Gastrocnemius medialis (tissue), 4 donors: ENCODE measurements at regions of chr1 and their contacts with region 1.

Region 1: DNA sequence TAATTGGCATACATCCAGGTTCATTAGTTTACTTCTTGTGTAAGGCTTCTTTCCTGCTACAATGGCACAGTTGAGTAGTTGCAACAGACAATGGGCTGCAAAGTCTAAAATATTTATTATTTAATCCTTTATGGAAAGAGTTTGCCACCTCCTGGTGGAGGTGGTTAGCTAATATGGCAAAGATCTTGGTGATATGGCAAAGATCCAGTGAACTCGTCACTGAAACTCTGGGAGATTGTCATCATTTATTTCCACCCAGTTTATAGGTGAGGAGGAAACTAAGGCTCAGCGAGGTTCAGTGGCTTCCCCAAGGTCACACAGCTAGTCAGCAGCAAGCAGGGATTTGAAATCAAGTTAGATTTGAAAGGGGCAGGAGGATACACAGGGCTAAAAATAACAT is 16.1 kb upstream of the IFFO2 start:
- DNase-seq: no peak
- ATAC-seq: peak in 1 of 2 donors; percentile 75
- H3K4me3 ChIP-seq: no peak overlapping the region
- H3K27ac ChIP-seq: no peak overlapping the region
- H3K4me1 ChIP-seq: peaks cover 0 to 5% of the 10 kb centered on the region in 2 donors
- H3K27me3 ChIP-seq: no peaks in the 10 kb centered on the region
- CTCF ChIP-seq: peak in 4 of 5 experiments; percentile 11 to 40 (median 26)
- POLR2A ChIP-seq: no peak

Region 2: GRCh38 chr1:18913065-18913835 is 59.3 kb before region 1 on chr1:
- in situ Hi-C with region 1: loop called in 1 of 4 experiments (anchors 5 kb)
- intact Hi-C with region 1: no loop called
- DNase-seq: peak; percentile 56 to 71
- ATAC-seq: peak; percentile 83 to 86
- H3K4me3 ChIP-seq: peak overlapping the region in 1 of 4 donors; percentile 13
- H3K27ac ChIP-seq: peak overlapping the region; percentile 15 to 71 (median 52)
- H3K4me1 ChIP-seq: peaks cover 4 to 5% of the 10 kb centered on the region in 2 donors
- H3K27me3 ChIP-seq: no peaks in the 10 kb centered on the region
- CTCF ChIP-seq: peak; percentile 87 to 94 (median 91)
- POLR2A ChIP-seq: no peak

Region 3: DNA sequence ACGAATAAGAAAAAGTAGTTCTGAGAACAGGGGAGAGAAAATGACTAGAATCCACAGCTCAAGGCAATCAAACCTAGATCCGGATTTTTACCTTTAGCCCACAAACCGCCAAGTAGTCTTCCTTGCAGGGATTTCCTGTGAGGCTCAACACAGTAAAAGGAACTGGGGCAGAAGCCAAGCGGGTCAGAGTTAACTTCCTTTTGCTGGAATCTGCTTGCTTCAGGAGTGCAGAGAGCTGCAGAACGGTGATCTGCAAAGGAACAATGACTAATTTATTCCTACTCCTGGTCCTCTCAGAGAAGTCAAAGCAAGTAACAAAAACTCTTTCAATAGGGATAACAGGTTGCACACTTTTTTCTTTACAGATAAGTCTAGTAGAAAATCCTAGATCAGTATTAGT is 184.1 kb after region 1 on chr1:
- in situ Hi-C with region 1: no loop called
- intact Hi-C with region 1: no loop called
- DNase-seq: no peak
- ATAC-seq: peak in 1 of 2 donors; percentile 56
- H3K4me3 ChIP-seq: no peak overlapping the region
- H3K27ac ChIP-seq: peak overlapping the region in 2 of 4 donors; percentile 14 to 37
- H3K4me1 ChIP-seq: peaks cover 3 to 8% of the 10 kb centered on the region in 2 donors
- H3K27me3 ChIP-seq: no peaks in the 10 kb centered on the region
- CTCF ChIP-seq: no peak
- POLR2A ChIP-seq: no peak